ENCODE measurements at regions of chr9 and their contacts with region 1.

Region 1: DNA sequence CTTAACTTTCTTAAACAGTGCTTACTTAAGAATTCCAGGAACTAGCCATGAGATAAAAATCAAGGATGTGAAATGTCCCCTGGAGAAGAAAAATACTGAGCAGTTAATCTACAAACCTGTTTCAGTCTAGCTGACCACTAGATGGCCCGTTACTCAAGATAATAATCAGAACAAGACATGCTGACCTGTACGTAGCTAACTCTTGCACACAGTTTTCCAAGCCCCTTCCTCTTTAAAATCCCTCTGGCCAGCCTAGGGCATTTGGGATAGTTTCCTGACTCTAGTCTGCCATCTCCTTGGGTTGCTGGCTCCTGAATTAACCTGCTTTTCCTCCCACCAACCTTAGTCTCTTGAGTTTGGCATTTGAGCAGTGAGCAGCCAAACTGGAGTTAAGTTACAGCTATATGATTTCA is 59.2 kb upstream of the TRAF1 start:
- DNase-seq: peak in 4 of 7 donors; percentile 18 to 37 (median 26)
- H3K4me3 ChIP-seq: no peak overlapping the region
- H3K27ac ChIP-seq: no peak overlapping the region
- H3K4me1 ChIP-seq: peaks cover 8 to 22% of the 10 kb centered on the region in 2 donors
- H3K27me3 ChIP-seq: no peaks in the 10 kb centered on the region
- CTCF ChIP-seq: peak; percentile 37 to 77 (median 64)
- POLR2A ChIP-seq: no peak

Region 2: GRCh38 chr9:120944434-120944843 is 41.4 kb before region 1 on chr9:
- intact Hi-C with region 1: loop called in 1 of 2 experiments (anchors 5 kb)
- DNase-seq: no peak
- H3K4me3 ChIP-seq: no peak overlapping the region
- H3K27ac ChIP-seq: no peak overlapping the region
- H3K4me1 ChIP-seq: peaks cover 10 to 24% of the 10 kb centered on the region in 2 donors
- H3K27me3 ChIP-seq: no peaks in the 10 kb centered on the region
- CTCF ChIP-seq: no peak
- POLR2A ChIP-seq: no peak

Measured in adrenal gland (tissue), 19 donors.